Body of pancreas (tissue), 4 donors: ENCODE measurements at regions of chr6 and their contacts with region 1.

Region 1: GRCh38 chr6:53484476-53485280 is 60.2 kb downstream of the GCLC start:
- DNase-seq: peak; percentile 83 to 88 (median 84)
- ATAC-seq: peak; percentile 77
- H3K4me3 ChIP-seq: no peak overlapping the region
- H3K27ac ChIP-seq: no peak overlapping the region
- H3K4me1 ChIP-seq: no peaks in the 10 kb centered on the region
- H3K27me3 ChIP-seq: no peaks in the 10 kb centered on the region
- CTCF ChIP-seq: peak; percentile 88 to 97 (median 95)
- POLR2A ChIP-seq: no peak

Region 2: DNA sequence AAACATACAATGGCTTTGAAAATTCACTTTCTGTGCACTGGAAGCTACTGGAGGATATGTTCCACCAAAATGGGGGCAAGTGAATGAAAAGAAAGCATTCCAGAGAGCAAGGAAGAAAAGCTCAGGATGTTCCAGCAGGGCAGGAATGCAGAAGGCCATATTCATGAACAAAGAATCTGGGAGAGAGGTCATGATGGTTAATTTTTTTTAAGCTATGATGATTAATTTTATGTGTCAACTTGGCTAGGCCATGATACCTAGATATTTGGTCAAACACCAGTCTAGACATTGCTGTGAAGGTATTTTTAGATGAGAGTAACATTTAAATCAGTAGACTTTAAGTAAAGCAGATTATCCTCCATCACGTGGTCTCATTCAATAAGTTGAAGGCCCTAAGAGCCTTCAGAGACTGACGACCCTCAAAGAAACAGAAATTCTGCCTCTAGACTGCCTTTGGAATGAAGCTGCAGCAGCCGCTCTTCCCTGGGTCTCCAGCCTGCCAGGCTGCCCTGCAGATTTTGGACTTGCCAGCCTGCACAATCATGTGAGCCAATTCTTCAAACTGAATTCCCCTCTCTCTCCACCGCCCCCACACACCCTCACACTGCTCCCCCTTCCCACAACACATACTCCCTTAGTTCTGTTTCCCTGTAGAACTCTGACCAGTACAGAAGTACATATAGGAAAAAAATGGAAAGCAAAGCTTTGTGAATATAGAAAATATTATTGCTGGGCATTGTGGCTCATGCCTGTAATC is 316.0 kb before region 1 on chr6:
- intact Hi-C with region 1: loop called (anchors 5 kb)
- DNase-seq: no peak
- ATAC-seq: no peak
- H3K4me3 ChIP-seq: no peak overlapping the region
- H3K27ac ChIP-seq: no peak overlapping the region
- H3K4me1 ChIP-seq: no peaks in the 10 kb centered on the region
- H3K27me3 ChIP-seq: no peaks in the 10 kb centered on the region
- CTCF ChIP-seq: no peak
- POLR2A ChIP-seq: no peak

Region 3: GRCh38 chr6:53691667-53692133 is 207.0 kb after region 1 on chr6:
- intact Hi-C with region 1: no loop called
- DNase-seq: no peak
- ATAC-seq: no peak
- H3K4me3 ChIP-seq: no peak overlapping the region
- H3K27ac ChIP-seq: no peak overlapping the region
- H3K4me1 ChIP-seq: peaks cover 13% of the 10 kb centered on the region
- H3K27me3 ChIP-seq: no peaks in the 10 kb centered on the region
- CTCF ChIP-seq: no peak
- POLR2A ChIP-seq: no peak